A673 (cell line): ENCODE measurements at regions of chr18 and their contacts with region 1.

Region 1: GRCh38 chr18:48675352-48675761 is 136.5 kb downstream of the CTIF start:
- DNase-seq: peak; percentile 85
- H3K4me3 ChIP-seq: no peak overlapping the region
- H3K27ac ChIP-seq: no peak overlapping the region
- H3K4me1 ChIP-seq: no peaks in the 10 kb centered on the region
- H3K27me3 ChIP-seq: no peaks in the 10 kb centered on the region
- CTCF ChIP-seq: peak; percentile 91

Region 2: DNA sequence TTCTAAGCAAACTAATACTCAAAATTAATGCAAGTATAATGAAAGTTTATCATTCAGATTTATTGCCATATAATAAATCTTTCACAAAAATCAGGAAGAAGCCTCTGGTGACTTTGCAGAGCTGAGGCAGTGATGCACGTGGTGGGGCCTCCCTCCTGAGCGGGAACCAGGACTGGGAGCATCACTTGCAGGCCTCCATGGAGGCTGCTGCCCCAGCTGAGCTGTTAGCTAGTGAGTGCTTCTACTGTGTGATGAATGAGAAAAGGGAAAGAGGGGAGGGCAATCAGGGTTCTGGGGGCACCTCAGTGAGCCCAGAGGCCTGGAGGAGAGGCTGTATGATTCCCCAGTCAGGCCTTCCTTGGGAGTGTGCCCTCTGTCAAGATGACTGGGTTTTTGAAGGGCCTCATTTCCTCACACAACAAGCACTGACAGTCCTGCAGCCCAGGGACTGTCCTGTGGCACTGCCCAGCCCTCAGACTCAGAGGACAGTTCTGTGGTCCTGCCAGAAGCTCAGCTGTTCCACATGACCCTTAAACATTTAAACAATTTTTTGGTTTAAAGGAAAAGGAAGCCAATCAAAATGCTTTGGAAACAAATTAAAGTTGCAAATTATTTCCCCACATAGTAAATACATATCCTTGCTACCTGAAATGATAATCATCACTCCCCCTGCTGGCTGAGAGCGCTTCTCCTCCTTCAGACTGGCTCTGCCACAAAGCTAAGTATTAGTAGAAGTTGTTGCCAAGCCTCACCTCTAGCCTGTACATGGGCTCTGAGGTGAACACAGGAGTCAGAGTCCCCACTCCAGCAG is 366.3 kb after region 1 on chr18:
- CTCF ChIA-PET with region 1: no interaction called
- POLR2A ChIA-PET with region 1: no interaction called
- intact Hi-C with region 1: loop called (anchors 5 kb)
- DNase-seq: peak; percentile 49
- H3K4me3 ChIP-seq: no peak overlapping the region
- H3K27ac ChIP-seq: no peak overlapping the region
- H3K4me1 ChIP-seq: no peaks in the 10 kb centered on the region
- H3K27me3 ChIP-seq: no peaks in the 10 kb centered on the region
- CTCF ChIP-seq: peak; percentile 68

Region 3: GRCh38 chr18:49081511-49082155 is 406.3 kb after region 1 on chr18:
- CTCF ChIA-PET with region 1: interaction called, 15 read pairs
- POLR2A ChIA-PET with region 1: no interaction called
- intact Hi-C with region 1: no loop called
- DNase-seq: no peak
- H3K4me3 ChIP-seq: no peak overlapping the region
- H3K27ac ChIP-seq: no peak overlapping the region
- H3K4me1 ChIP-seq: no peaks in the 10 kb centered on the region
- H3K27me3 ChIP-seq: no peaks in the 10 kb centered on the region
- CTCF ChIP-seq: no peak

Region 4: GRCh38 chr18:49178736-49179135 is 503.4 kb after region 1 on chr18:
- CTCF ChIA-PET with region 1: interaction called, 3 read pairs
- POLR2A ChIA-PET with region 1: no interaction called
- intact Hi-C with region 1: loop called (anchors 2 kb)
- DNase-seq: peak; percentile 35
- H3K4me3 ChIP-seq: no peak overlapping the region
- H3K27ac ChIP-seq: no peak overlapping the region
- H3K4me1 ChIP-seq: peaks cover 13% of the 10 kb centered on the region
- H3K27me3 ChIP-seq: no peaks in the 10 kb centered on the region
- CTCF ChIP-seq: peak; percentile 72

Region 5: GRCh38 chr18:49238433-49239042 is 563.2 kb after region 1 on chr18:
- CTCF ChIA-PET with region 1: interaction called, 3 read pairs
- POLR2A ChIA-PET with region 1: no interaction called
- intact Hi-C with region 1: loop called (anchors 2 kb)
- DNase-seq: peak; percentile 72
- H3K4me3 ChIP-seq: no peak overlapping the region
- H3K27ac ChIP-seq: no peak overlapping the region
- H3K4me1 ChIP-seq: no peaks in the 10 kb centered on the region
- H3K27me3 ChIP-seq: no peaks in the 10 kb centered on the region
- CTCF ChIP-seq: peak; percentile 63

Region 6: GRCh38 chr18:49412679-49413078 is 737.3 kb after region 1 on chr18:
- CTCF ChIA-PET with region 1: no interaction called
- POLR2A ChIA-PET with region 1: no interaction called
- intact Hi-C with region 1: loop called (anchors 2 kb)
- DNase-seq: no peak
- H3K4me3 ChIP-seq: no peak overlapping the region
- H3K27ac ChIP-seq: no peak overlapping the region
- H3K4me1 ChIP-seq: peaks cover 13% of the 10 kb centered on the region
- H3K27me3 ChIP-seq: no peaks in the 10 kb centered on the region
- CTCF ChIP-seq: no peak

Region 7: DNA sequence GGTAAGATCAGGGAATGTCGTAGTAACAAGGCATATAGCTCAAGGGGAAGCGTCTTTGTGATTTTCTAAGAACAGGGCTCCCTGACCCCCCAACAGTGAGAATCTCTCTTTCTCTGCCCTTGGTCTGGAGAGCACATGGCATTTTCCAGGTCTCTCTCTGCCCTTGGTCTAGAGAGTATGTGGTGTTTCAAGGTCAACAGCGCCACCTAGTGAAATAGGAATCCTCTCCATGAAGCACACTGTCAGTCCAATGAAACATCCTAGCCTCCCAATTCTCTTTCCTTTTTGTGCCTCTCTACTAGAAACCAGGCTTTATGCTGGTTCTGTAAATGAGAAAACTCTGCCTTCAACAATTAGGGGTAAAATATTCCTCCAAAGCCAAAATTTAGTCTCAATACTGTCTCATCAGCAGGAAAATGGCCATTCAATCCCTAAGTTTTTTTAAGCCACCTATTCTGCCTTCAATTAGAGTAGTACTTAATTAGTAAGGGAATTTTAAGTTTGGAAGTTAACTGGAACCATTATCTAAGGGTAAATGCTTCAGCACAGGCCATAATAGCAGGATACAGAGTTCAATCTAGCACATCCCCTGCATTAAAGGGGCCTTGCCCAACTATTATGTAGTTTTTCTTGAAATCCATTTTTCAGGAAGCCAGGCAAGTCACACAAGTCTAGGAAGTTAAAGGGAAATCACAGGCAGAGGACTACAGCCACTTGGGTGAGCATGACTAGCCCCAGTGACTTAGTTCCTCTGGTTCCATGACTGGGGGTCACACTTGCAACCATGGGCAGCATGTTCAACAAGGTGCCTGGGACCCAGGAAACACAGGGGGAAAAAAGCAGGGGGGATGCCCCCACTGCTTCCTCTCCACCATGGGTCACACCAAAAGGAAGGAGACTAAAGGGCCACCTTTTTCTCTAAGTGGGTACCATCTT is 772.7 kb after region 1 on chr18:
- CTCF ChIA-PET with region 1: no interaction called
- POLR2A ChIA-PET with region 1: no interaction called
- intact Hi-C with region 1: loop called (anchors 2 kb)
- DNase-seq: peak; percentile 81
- H3K4me3 ChIP-seq: no peak overlapping the region
- H3K27ac ChIP-seq: no peak overlapping the region
- H3K4me1 ChIP-seq: no peaks in the 10 kb centered on the region
- H3K27me3 ChIP-seq: no peaks in the 10 kb centered on the region
- CTCF ChIP-seq: peak; percentile 74